Activated naive CD4-positive, alpha-beta T cell treated with anti-CD3 and anti-CD28 coated beads for 36 hours (primary cell): ENCODE measurements at regions of chr10 and their contacts with region 1.

Region 1: GRCh38 chr10:27661514-27662286 is 83.9 kb downstream of the MKX start:
- DNase-seq: no peak
- H3K4me3 Mint-ChIP-seq: no peak overlapping the region
- H3K27ac Mint-ChIP-seq: no peak overlapping the region
- H3K4me1 Mint-ChIP-seq: no peaks in the 10 kb centered on the region
- H3K27me3 Mint-ChIP-seq: peaks cover 18% of the 10 kb centered on the region

Region 2: GRCh38 chr10:27369880-27370279 is 291.8 kb before region 1 on chr10:
- CTCF ChIA-PET with region 1: interaction called, 3 read pairs
- intact Hi-C with region 1: loop called (anchors 2 kb)
- DNase-seq: no peak
- H3K4me3 Mint-ChIP-seq: no peak overlapping the region
- H3K27ac Mint-ChIP-seq: no peak overlapping the region
- H3K4me1 Mint-ChIP-seq: peaks cover 12% of the 10 kb centered on the region
- H3K27me3 Mint-ChIP-seq: no peaks in the 10 kb centered on the region

Region 3: DNA sequence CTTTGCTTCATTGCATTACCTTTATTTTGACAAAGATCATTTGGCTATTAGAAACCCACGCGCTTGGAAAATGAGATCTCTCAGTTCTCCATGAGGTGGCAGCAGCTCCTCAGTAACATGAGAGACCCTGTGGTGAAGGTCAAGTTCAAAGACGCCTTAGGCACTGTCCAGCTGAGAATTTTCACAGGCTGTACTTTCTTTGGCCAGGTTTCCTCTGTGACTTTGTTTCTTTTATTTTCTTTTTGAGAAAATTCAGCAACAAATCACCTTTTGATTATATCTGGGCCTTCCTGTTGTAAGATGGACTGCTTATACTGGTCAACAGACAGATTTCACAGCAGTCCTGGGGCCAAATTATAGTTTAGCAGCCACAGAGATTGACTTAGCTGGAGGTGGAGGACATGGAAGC is 103.1 kb before region 1 on chr10:
- CTCF ChIA-PET with region 1: interaction called, 4 read pairs
- intact Hi-C with region 1: loop called (anchors 1 kb)
- DNase-seq: peak; percentile 60
- H3K4me3 Mint-ChIP-seq: no peak overlapping the region
- H3K27ac Mint-ChIP-seq: no peak overlapping the region
- H3K4me1 Mint-ChIP-seq: no peaks in the 10 kb centered on the region
- H3K27me3 Mint-ChIP-seq: no peaks in the 10 kb centered on the region

Region 4: GRCh38 chr10:27680691-27681605 is 19.2 kb after region 1 on chr10:
- CTCF ChIA-PET with region 1: no interaction called
- intact Hi-C with region 1: no loop called
- DNase-seq: no peak
- H3K4me3 Mint-ChIP-seq: no peak overlapping the region
- H3K27ac Mint-ChIP-seq: no peak overlapping the region
- H3K4me1 Mint-ChIP-seq: no peaks in the 10 kb centered on the region
- H3K27me3 Mint-ChIP-seq: no peaks in the 10 kb centered on the region

Region 5: DNA sequence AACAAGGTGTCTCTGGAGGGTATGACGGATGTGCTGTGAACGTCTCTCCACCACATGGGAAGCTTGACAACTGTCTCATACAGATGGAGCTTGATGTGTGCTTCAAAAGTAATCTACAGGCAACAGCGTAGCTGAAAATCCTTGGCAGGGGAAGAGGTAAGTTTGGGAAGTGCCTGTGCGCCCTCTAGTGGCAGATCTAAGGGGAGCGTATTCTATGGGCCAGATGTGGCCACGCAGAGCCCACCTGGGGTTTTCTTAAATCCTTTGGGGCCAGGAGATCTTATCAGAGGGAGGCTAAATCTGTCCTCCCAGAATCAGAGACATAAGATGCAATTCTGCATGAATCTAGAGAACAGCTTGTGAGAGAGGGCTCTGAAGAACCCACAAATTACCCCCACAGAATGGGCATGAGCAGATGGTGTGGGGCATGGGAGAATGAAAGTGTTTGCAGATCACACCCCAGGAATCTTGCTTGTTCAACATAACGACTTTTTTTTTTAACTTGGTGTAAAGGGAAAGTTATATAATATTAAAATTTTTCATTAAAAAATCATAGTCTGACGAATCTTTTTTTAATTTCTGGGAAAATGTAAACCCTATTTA is 732.4 kb after region 1 on chr10:
- CTCF ChIA-PET with region 1: no interaction called
- intact Hi-C with region 1: loop called (anchors 5 kb)
- DNase-seq: peak; percentile 83
- H3K4me3 Mint-ChIP-seq: no peak overlapping the region
- H3K27ac Mint-ChIP-seq: no peak overlapping the region
- H3K4me1 Mint-ChIP-seq: peaks cover 4% of the 10 kb centered on the region
- H3K27me3 Mint-ChIP-seq: no peaks in the 10 kb centered on the region